ENCODE measurements at regions of chr10 and their contacts with region 1.

Region 1: DNA sequence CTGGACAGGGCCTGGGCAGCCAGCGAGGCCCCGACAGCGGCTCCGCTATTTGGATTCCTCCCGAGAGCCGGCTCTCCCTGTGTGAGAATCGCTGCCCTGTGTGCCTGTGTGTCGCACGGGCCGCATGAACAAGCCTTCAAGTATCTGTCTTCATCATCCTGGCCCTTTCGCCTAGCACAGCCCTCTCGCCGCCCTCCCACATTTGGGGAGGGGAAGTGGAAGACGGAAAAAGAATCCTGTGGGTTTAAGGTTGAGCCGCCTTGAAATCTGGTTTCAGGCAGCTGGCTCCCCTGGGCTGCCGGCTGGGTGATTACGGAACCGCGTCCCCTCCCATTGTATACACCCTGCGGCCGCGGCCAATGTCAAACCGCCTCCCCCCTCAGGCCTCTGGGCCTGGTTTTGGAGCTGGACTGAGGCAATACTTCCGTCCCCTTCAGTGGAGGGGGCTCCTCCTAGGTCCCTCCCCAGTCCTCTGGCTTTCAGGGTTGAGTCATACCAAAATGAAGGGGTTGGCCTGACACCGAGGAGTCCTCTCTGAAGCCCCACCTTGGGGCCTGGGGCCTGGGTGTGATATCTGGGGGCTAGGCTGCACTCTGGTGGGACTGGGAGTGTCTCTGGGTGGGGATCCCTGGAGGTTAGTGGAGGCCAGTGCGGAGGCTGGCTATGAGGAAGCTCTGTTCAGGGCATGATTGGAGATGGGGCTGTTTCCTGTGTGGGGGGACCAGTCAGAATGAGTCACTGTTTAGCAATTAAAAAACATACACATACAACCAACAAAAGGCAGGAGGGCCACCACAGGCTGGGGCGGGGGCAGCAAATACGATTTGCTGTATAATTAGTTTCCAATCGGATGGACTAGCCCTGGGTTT is 1.7 kb downstream of the TRIM8 start:
- DNase-seq: peak; percentile 92 to 94
- H3K4me3 ChIP-seq: peak overlapping the region; percentile 59 to 84 (median 78)
- H3K27ac ChIP-seq: peak overlapping the region; percentile 96 to 100 (median 100)
- H3K4me1 ChIP-seq: peaks cover 46 to 50% of the 10 kb centered on the region in 2 donors
- H3K27me3 ChIP-seq: no peaks in the 10 kb centered on the region
- CTCF ChIP-seq: no peak
- POLR2A ChIP-seq: peak in 1 of 2 donors; percentile 89

Region 2: DNA sequence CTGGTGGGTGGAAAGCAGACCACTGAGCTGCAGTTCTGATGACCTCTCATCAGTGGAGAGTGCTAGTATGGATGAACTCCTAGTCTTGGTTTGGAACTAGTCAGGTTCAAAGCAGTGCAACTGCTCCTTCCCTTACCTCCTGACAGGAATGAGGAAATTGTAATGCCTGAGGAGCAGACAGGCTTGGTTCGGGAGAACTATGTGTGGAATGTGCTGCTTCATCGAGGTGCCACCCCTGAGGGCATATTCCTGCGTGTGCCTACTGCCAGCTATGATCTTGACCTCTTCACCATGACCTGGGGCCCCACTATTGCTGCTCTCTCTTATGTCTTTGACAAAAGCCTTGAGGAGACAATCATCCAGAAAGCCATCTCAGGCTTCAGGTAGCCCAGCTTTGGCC is 277.9 kb before region 1 on chr10:
- intact Hi-C with region 1: no loop called
- DNase-seq: no peak
- H3K4me3 ChIP-seq: no peak overlapping the region
- H3K27ac ChIP-seq: no peak overlapping the region
- H3K4me1 ChIP-seq: no peaks in the 10 kb centered on the region
- H3K27me3 ChIP-seq: no peaks in the 10 kb centered on the region
- CTCF ChIP-seq: no peak
- POLR2A ChIP-seq: no peak

Region 3: GRCh38 chr10:102450194-102450938 is 195.6 kb before region 1 on chr10:
- intact Hi-C with region 1: no loop called
- DNase-seq: peak; percentile 92 to 93
- H3K4me3 ChIP-seq: peak overlapping the region; percentile 63 to 93 (median 73)
- H3K27ac ChIP-seq: peak overlapping the region; percentile 81 to 89 (median 84)
- H3K4me1 ChIP-seq: peaks cover 37% of the 10 kb centered on the region in 2 donors
- H3K27me3 ChIP-seq: no peaks in the 10 kb centered on the region
- CTCF ChIP-seq: peak in 1 of 6 experiments; percentile 12
- POLR2A ChIP-seq: peak; percentile 8 to 89

Region 4: DNA sequence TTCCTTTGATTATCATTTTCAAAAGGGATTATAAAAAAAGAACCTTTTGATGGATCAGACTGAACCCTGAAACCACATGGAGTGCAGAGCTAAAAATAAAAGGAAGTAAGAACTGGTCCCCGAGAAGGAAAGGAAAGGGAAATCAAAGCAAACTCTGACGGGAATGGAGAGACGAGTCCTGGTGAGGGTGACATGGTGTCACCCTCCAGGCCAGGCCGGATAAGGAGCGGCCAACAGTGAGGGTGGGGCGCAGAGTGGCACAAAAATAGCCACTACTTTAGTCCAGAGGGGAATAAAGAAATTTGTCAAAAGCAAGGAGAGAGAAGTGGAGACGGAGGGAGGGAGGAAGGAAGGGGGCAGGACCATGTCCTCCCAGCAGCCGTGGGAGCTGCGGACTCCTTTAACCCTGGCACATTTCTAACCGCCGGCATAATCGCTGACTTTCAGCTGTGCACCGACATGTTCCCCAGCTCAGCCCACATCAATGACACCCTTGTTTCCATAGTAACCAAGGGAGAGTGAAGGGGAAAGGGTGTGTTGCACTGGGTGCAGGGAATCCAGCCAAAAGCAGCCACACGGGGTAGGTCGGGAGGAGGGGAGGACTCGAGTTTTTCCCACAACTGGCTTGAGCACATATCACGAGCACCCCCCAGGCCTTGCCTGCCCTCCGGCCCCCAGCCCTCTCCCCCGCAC is 28.0 kb after region 1 on chr10:
- intact Hi-C with region 1: loop called (anchors 2 kb)
- DNase-seq: peak; percentile 78 to 80
- H3K4me3 ChIP-seq: no peak overlapping the region
- H3K27ac ChIP-seq: peak overlapping the region; percentile 94 to 99 (median 96)
- H3K4me1 ChIP-seq: peaks cover 90 to 92% of the 10 kb centered on the region in 2 donors
- H3K27me3 ChIP-seq: no peaks in the 10 kb centered on the region
- CTCF ChIP-seq: no peak
- POLR2A ChIP-seq: peak in 1 of 2 donors; percentile 77